ENCODE measurements at regions of chr18 and their contacts with region 1.

Region 1: GRCh38 chr18:67217551-67218166 is 298.9 kb downstream of the DSEL start:
- DNase-seq: peak; percentile 35
- ATAC-seq: peak; percentile 80; the same call in 1 of the 2 replicates
- H3K4me3 ChIP-seq: no peak overlapping the region
- H3K27ac ChIP-seq: no peak overlapping the region
- H3K4me1 ChIP-seq: no peaks in the 10 kb centered on the region
- H3K27me3 ChIP-seq: no peaks in the 10 kb centered on the region
- CTCF ChIP-seq: peak; percentile 42; the same call in 1 of the 2 replicates

Region 2: GRCh38 chr18:66792466-66792865 is 425.2 kb before region 1 on chr18:
- CTCF ChIA-PET with region 1: no interaction called
- POLR2A ChIA-PET with region 1: no interaction called
- in situ Hi-C with region 1: no loop called
- intact Hi-C with region 1: no loop called
- DNase-seq: no peak
- ATAC-seq: no peak
- H3K4me3 ChIP-seq: no peak overlapping the region
- H3K27ac ChIP-seq: no peak overlapping the region
- H3K4me1 ChIP-seq: no peaks in the 10 kb centered on the region
- H3K27me3 ChIP-seq: no peaks in the 10 kb centered on the region
- CTCF ChIP-seq: no peak

Region 3: GRCh38 chr18:67783196-67783946 is 565.7 kb after region 1 on chr18:
- CTCF ChIA-PET with region 1: interaction called, 11 read pairs
- POLR2A ChIA-PET with region 1: no interaction called
- in situ Hi-C with region 1: no loop called
- intact Hi-C with region 1: no loop called
- DNase-seq: peak; percentile 64
- ATAC-seq: peak; percentile 70; the same call in 1 of the 2 replicates
- H3K4me3 ChIP-seq: no peak overlapping the region
- H3K27ac ChIP-seq: no peak overlapping the region
- H3K4me1 ChIP-seq: no peaks in the 10 kb centered on the region
- H3K27me3 ChIP-seq: no peaks in the 10 kb centered on the region
- CTCF ChIP-seq: no peak

Region 4: GRCh38 chr18:68660354-68661183 is 1442.9 kb after region 1 on chr18:
- CTCF ChIA-PET with region 1: no interaction called
- POLR2A ChIA-PET with region 1: no interaction called
- in situ Hi-C with region 1: no loop called
- intact Hi-C with region 1: loop called (anchors 10 kb)
- DNase-seq: peak; percentile 22
- ATAC-seq: no peak
- H3K4me3 ChIP-seq: no peak overlapping the region
- H3K27ac ChIP-seq: no peak overlapping the region
- H3K4me1 ChIP-seq: no peaks in the 10 kb centered on the region
- H3K27me3 ChIP-seq: no peaks in the 10 kb centered on the region
- CTCF ChIP-seq: peak; percentile 46; the same call in 1 of the 2 replicates